ENCODE measurements at regions of chr12 and their contacts with region 1.

Region 1: GRCh38 chr12:71746983-71747611 is 7.6 kb upstream of the RAB21 start:
- DNase-seq: peak; percentile 46 to 64
- H3K4me3 ChIP-seq: no peak overlapping the region
- H3K4me3 Mint-ChIP-seq: no peak overlapping the region
- H3K27ac Mint-ChIP-seq: no peak overlapping the region
- H3K4me1 ChIP-seq: no peaks in the 10 kb centered on the region
- H3K4me1 Mint-ChIP-seq: no peaks in the 10 kb centered on the region
- H3K27me3 ChIP-seq: no peaks in the 10 kb centered on the region
- H3K27me3 Mint-ChIP-seq: peaks cover 10% of the 10 kb centered on the region
- CTCF ChIP-seq: peak; percentile 74 to 75

Region 2: GRCh38 chr12:71216725-71217579 is 530.1 kb before region 1 on chr12:
- CTCF ChIA-PET with region 1: no interaction called
- POLR2A ChIA-PET with region 1: no interaction called
- intact Hi-C with region 1: loop called (anchors 1 kb)
- DNase-seq: peak; percentile 49 to 54
- H3K4me3 ChIP-seq: no peak overlapping the region
- H3K4me3 Mint-ChIP-seq: no peak overlapping the region
- H3K27ac Mint-ChIP-seq: no peak overlapping the region
- H3K4me1 ChIP-seq: peaks cover 18% of the 10 kb centered on the region
- H3K4me1 Mint-ChIP-seq: peaks cover 13% of the 10 kb centered on the region
- H3K27me3 ChIP-seq: no peaks in the 10 kb centered on the region
- H3K27me3 Mint-ChIP-seq: no peaks in the 10 kb centered on the region
- CTCF ChIP-seq: peak; percentile 39 to 43

Region 3: DNA sequence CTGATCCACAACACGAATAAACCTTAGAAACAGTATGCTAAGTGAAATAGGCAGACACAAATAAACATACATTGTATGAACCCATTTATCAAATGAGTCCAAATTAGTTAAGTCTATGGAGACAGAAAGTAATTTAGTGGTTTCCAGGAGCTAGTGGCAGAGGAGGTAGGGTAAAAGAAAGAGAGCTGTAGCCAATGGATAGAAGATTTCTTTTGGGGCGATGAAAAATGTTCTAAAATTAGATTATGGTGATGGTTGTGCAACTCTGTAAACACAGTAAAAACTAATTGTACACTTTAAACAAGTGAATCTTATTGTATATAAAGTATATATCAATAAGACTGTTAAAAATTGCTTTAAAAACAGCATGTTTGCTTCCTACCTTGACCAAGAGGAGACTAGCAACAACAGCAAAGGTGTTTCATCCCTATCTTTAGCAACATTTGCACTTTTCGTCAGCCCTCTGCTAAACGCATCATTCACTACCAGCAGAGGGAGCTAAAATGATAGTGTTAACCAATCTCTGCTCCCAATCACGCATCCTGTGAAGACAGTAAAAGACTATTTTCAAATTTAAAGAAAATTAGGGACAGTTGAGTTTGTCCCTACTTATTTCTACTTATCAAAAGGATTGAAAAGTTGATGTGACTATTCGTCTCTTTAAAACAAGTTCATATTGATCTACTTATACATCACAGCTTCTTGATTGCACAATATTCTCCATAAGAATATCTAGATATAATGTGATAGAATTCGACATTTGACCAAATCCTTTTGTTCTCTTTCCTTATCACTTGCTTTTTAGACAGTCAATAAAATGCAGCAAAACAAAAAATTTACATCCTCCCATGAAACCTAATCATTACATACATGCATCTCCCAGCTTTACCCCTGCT is 331.5 kb before region 1 on chr12:
- CTCF ChIA-PET with region 1: interaction called, 7 read pairs
- POLR2A ChIA-PET with region 1: no interaction called
- intact Hi-C with region 1: loop called (anchors 1 kb)
- DNase-seq: peak; percentile 41 to 72
- H3K4me3 ChIP-seq: no peak overlapping the region
- H3K4me3 Mint-ChIP-seq: no peak overlapping the region
- H3K27ac Mint-ChIP-seq: no peak overlapping the region
- H3K4me1 ChIP-seq: no peaks in the 10 kb centered on the region
- H3K4me1 Mint-ChIP-seq: no peaks in the 10 kb centered on the region
- H3K27me3 ChIP-seq: no peaks in the 10 kb centered on the region
- H3K27me3 Mint-ChIP-seq: no peaks in the 10 kb centered on the region
- CTCF ChIP-seq: peak; percentile 70 to 74

Region 4: DNA sequence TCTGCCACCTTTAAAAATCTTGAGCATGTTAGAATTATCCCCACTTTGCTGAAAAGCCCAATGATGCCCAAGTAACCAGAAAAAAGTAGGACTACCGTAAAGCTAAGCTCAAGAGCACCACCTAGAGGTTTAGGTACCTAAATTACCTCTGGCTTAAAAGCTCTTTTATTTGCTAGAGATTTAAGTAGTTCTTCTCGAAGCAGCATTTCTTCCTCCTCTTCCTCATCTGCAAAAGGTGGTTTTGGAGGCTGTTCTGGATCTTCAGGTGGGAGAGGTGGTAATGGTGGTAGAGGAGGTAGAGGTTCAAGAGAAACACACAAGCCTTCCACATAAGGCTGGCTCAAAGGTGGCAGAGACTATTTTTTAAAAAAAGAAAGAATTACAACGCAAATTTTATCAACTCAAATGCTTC is 110.4 kb before region 1 on chr12:
- CTCF ChIA-PET with region 1: interaction called, 40 read pairs
- POLR2A ChIA-PET with region 1: no interaction called
- intact Hi-C with region 1: no loop called
- DNase-seq: peak in 1 of 2 experiments; percentile 60
- H3K4me3 ChIP-seq: no peak overlapping the region
- H3K4me3 Mint-ChIP-seq: no peak overlapping the region
- H3K27ac Mint-ChIP-seq: no peak overlapping the region
- H3K4me1 ChIP-seq: peaks cover 22% of the 10 kb centered on the region
- H3K4me1 Mint-ChIP-seq: peaks cover 10% of the 10 kb centered on the region
- H3K27me3 ChIP-seq: no peaks in the 10 kb centered on the region
- H3K27me3 Mint-ChIP-seq: no peaks in the 10 kb centered on the region
- CTCF ChIP-seq: peak; percentile 63 to 84

Region 5: DNA sequence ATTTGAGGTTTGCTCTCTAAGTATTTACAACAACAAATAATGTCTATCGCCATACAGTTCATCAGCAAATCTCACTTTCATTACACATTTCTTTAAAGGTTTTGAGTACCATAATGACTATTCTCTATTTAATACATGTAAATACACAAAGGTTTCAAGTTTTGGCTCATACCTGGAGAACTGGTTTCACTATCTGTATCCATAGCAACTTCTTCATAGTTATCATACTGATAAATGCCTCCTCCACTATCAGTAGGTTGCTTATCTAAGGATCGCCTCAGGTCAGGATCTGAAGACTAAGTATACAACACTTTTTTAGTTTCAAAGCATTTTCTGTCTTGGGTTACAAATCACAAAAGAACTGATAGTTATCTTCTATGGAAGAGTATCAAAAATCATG is 104.8 kb before region 1 on chr12:
- CTCF ChIA-PET with region 1: interaction called, 40 read pairs
- POLR2A ChIA-PET with region 1: no interaction called
- intact Hi-C with region 1: loop called (anchors 1 kb)
- DNase-seq: peak in 1 of 2 experiments; percentile 76
- H3K4me3 ChIP-seq: no peak overlapping the region
- H3K4me3 Mint-ChIP-seq: peak overlapping the region; percentile 55
- H3K27ac Mint-ChIP-seq: peak overlapping the region; percentile 93
- H3K4me1 ChIP-seq: peaks cover 26% of the 10 kb centered on the region
- H3K4me1 Mint-ChIP-seq: peaks cover 23% of the 10 kb centered on the region
- H3K27me3 ChIP-seq: no peaks in the 10 kb centered on the region
- H3K27me3 Mint-ChIP-seq: no peaks in the 10 kb centered on the region
- CTCF ChIP-seq: no peak

Region 6: GRCh38 chr12:71663561-71664294 is 83.4 kb before region 1 on chr12 and contains the start of gene ZFC3H1:
- CTCF ChIA-PET with region 1: interaction called, 9 read pairs
- POLR2A ChIA-PET with region 1: interaction called, 8 read pairs
- intact Hi-C with region 1: loop called (anchors 1 kb)
- DNase-seq: peak; percentile 94 to 97
- H3K4me3 ChIP-seq: peak within 1 kb of the TSS; percentile 93
- H3K4me3 Mint-ChIP-seq: peak within 1 kb of the TSS; percentile 98
- H3K27ac Mint-ChIP-seq: peak within 1 kb of the TSS; percentile 99
- H3K4me1 ChIP-seq: peaks cover 11% of the 10 kb centered on the region; the same call in 1 of the 2 replicates
- H3K4me1 Mint-ChIP-seq: peaks cover 12% of the 10 kb centered on the region
- H3K27me3 ChIP-seq: no peaks in the 10 kb centered on the region
- H3K27me3 Mint-ChIP-seq: no peaks in the 10 kb centered on the region
- CTCF ChIP-seq: peak in 1 of 2 experiments; percentile 34
- total RNA-seq, gene ZFC3H1: 48.7 and 50.7 TPM in 2 replicates

Region 7: GRCh38 chr12:71685914-71686665 is 61.0 kb before region 1 on chr12 and contains the start of gene TMEM19:
- CTCF ChIA-PET with region 1: interaction called, 49 read pairs
- POLR2A ChIA-PET with region 1: interaction called, 8 read pairs
- intact Hi-C with region 1: loop called (anchors 1 kb)
- DNase-seq: peak; percentile 89 to 91
- H3K4me3 ChIP-seq: peak within 1 kb of the TSS; percentile 46
- H3K4me3 Mint-ChIP-seq: peak within 1 kb of the TSS; percentile 97
- H3K27ac Mint-ChIP-seq: peak within 1 kb of the TSS; percentile 93
- H3K4me1 ChIP-seq: no peaks in the 10 kb centered on the region
- H3K4me1 Mint-ChIP-seq: no peaks in the 10 kb centered on the region
- H3K27me3 ChIP-seq: no peaks in the 10 kb centered on the region
- H3K27me3 Mint-ChIP-seq: no peaks in the 10 kb centered on the region
- CTCF ChIP-seq: peak in 1 of 2 experiments; percentile 39
- total RNA-seq, gene TMEM19: 17.8 and 24.2 TPM in 2 replicates

Region 8: GRCh38 chr12:71840231-71840847 is 93.2 kb after region 1 on chr12:
- CTCF ChIA-PET with region 1: no interaction called
- POLR2A ChIA-PET with region 1: no interaction called
- intact Hi-C with region 1: no loop called
- DNase-seq: peak in 1 of 2 experiments; percentile 29
- H3K4me3 ChIP-seq: peak overlapping the region; percentile 73
- H3K4me3 Mint-ChIP-seq: peak overlapping the region; percentile 96
- H3K27ac Mint-ChIP-seq: peak overlapping the region; percentile 99
- H3K4me1 ChIP-seq: 0 out of 2 replicates have a peak, but pooled peaks cover 9% of the 10 kb centered on the region
- H3K4me1 Mint-ChIP-seq: peaks cover 6% of the 10 kb centered on the region
- H3K27me3 ChIP-seq: no peaks in the 10 kb centered on the region
- H3K27me3 Mint-ChIP-seq: no peaks in the 10 kb centered on the region
- CTCF ChIP-seq: no peak

Measured in Caco-2 (cell line).